ENCODE measurements at regions of chr9 and their contacts with region 1.

Region 1: GRCh38 chr9:99244344-99245260 is 22.5 kb downstream of the SEC61B start:
- DNase-seq: no peak
- ATAC-seq: no peak
- H3K4me3 ChIP-seq: no peak overlapping the region
- H3K27ac ChIP-seq: no peak overlapping the region
- H3K4me1 ChIP-seq: no peaks in the 10 kb centered on the region
- H3K27me3 ChIP-seq: no peaks in the 10 kb centered on the region
- CTCF ChIP-seq: no peak

Region 2: GRCh38 chr9:99299211-99300102 is 54.9 kb after region 1 on chr9:
- CTCF ChIA-PET with region 1: interaction called, 13 read pairs
- POLR2A ChIA-PET with region 1: no interaction called
- in situ Hi-C with region 1: no loop called
- intact Hi-C with region 1: no loop called
- DNase-seq: no peak
- ATAC-seq: no peak
- H3K4me3 ChIP-seq: no peak overlapping the region
- H3K27ac ChIP-seq: no peak overlapping the region
- H3K4me1 ChIP-seq: no peaks in the 10 kb centered on the region
- H3K27me3 ChIP-seq: no peaks in the 10 kb centered on the region
- CTCF ChIP-seq: peak; percentile 29